Heart left ventricle (tissue), 16 donors: ENCODE measurements at regions of chr1 and their contacts with region 1.

Region 1: DNA sequence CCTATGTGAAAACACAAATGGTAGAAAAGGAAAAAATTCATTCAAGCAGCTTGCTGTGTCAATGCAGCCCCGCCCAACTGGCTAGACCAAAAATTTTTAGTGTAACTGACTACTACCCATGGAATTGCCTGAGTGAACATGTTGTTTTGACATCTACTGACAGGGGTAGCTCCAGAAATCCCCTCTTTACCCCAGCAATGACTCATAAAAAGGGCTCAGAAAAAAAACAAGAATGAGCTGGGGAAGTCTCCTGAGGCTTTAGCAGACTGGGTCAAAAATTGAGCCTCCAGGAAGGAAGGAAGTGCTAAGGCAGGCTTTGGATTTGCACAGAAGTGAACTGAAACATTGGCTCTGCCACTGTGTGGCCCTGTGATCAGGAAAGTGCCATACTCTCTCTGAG is 24.4 kb upstream of the FGGY start:
- DNase-seq: no peak
- ATAC-seq: peak in 3 of 4 donors; percentile 42 to 75 (median 52)
- H3K4me3 ChIP-seq: no peak overlapping the region
- H3K27ac ChIP-seq: peak overlapping the region in 4 of 12 donors; percentile 1 to 49 (median 8)
- H3K4me1 ChIP-seq: peaks cover 0 to 30% (median 6%) of the 10 kb centered on the region in 12 donors
- H3K27me3 ChIP-seq: no peaks in the 10 kb centered on the region
- CTCF ChIP-seq: no peak
- POLR2A ChIP-seq: no peak

Region 2: DNA sequence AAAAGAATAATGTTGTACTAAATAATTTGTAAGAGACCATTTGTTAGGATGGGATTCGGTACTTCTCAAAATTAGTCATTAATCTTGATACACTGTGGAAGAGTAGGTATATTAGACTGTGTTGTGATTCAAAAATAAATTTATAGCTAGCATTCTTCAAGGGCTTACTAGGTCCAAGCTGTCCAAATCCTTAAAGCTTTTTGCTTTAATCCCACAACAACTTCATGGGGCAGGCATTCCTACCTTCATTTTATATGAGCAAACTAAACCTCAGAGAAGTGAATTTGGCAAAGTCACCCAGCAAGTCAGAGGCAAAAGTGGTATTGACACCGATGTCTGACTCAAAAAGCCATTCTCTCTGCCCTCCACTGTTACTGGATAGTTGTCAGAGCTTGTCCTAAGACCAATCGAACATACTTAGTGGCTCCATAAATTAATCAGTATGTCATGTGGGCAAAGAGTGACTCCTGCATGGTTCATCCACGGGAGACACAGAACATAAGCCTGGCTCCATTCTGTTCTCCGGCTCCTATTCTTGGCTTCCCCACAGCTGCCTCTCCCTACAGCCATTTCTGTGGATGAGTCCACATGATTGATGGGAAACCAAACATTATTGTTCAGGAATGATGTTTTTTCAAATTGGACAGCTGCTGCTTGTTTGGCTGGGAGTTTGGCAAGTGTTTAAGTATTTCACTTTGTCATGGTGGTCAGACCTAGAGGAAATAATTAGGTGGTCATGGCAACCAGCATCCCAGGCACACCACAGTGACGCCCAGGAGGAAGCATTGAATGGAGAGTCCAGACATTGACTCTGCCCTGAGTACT is 109.0 kb before region 1 on chr1:
- intact Hi-C with region 1: loop called in 1 of 10 experiments (anchors 10 kb)
- DNase-seq: no peak
- ATAC-seq: peak in 3 of 4 donors; percentile 58 to 84 (median 66)
- H3K4me3 ChIP-seq: no peak overlapping the region
- H3K27ac ChIP-seq: no peak overlapping the region
- H3K4me1 ChIP-seq: peaks cover 0 to 6% (median 0%) of the 10 kb centered on the region in 12 donors
- H3K27me3 ChIP-seq: no peaks in the 10 kb centered on the region
- CTCF ChIP-seq: no peak
- POLR2A ChIP-seq: no peak